ENCODE measurements at regions of chr1 and their contacts with region 1.

Region 1: DNA sequence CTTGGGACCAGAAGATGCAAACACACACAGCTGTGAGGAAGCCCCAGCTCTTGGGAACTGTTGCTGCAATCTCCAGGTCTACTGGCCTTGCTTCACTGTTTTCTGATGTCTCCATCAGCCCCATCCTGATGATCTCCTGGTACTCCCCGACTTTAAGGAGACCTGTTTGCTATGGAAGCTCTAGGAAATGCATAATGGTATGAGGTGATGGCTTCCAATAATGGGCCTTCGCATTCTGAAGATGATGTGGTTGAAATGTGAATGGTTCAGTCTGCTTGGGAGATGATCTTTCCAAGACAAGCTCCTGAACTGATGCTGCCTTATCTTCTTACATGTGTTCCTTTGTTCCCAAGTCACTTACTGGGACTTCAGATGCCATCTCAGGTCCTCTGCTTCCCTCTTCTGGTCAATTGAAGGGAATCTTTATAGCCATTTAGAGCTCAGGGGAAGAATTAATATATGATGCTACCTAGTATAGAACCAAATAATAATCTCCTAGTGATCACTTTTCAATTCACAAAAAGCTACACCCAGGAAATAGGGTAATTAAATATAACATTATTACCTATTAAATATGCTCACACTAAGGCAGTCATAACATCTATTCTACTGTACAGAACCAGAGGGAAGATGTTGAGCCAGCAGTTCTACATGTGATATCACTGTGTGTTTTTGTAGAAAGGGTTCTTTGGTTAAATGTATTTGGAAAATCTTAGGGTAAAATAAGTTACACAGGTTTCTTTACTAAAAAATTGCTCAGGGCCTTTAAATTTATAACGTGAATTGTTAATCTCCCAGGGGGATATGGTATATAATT is 73.9 kb upstream of the VTCN1 start:
- DNase-seq: peak; percentile 34 to 50
- H3K4me3 ChIP-seq: no peak overlapping the region
- H3K4me3 Mint-ChIP-seq: no peak overlapping the region
- H3K27ac Mint-ChIP-seq: no peak overlapping the region
- H3K4me1 ChIP-seq: no peaks in the 10 kb centered on the region
- H3K4me1 Mint-ChIP-seq: no peaks in the 10 kb centered on the region
- H3K27me3 ChIP-seq: no peaks in the 10 kb centered on the region
- H3K27me3 Mint-ChIP-seq: no peaks in the 10 kb centered on the region
- CTCF ChIP-seq: peak; percentile 46 to 48

Region 2: DNA sequence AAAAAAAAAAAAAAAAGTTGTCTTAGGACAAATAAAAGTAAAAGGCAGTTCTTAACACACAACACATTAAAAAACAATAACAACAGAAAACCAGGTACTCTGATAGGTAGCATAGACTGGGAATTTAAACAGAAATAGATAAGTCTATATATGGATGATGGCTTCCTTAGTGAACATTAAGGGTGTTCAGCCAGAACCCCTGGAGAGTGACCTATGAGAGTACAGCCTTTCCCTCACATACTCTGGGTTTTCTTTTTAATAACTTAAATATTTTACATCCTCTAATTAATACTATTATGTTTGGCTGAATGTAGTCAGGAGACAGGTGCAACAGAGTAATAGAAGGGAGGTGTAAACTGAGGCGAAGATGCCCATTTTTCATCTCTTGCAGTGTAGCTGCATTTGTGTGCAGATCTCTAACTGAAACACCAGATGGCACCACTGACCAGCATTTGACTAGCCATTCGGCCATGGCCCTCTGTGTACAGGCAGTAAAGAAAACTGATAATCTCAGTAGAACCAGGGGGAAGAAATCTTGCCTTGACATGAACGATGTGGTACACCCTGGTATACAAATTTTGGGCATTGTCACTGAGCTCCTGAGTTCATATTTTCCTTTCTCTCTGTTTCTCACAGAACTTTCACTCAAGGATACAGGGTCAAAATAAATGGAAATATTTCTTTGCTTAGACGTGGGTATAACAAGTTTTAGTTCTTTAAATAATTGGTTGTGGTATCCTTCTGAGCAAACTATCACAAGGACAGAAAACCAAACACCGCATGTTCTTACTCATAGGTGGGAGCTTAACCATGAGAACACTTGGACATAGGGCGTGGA is 216.9 kb before region 1 on chr1:
- CTCF ChIA-PET with region 1: interaction called, 12 read pairs
- POLR2A ChIA-PET with region 1: no interaction called
- intact Hi-C with region 1: loop called (anchors 1 kb)
- DNase-seq: peak; percentile 38 to 49
- H3K4me3 ChIP-seq: no peak overlapping the region
- H3K4me3 Mint-ChIP-seq: no peak overlapping the region
- H3K27ac Mint-ChIP-seq: no peak overlapping the region
- H3K4me1 ChIP-seq: no peaks in the 10 kb centered on the region
- H3K4me1 Mint-ChIP-seq: no peaks in the 10 kb centered on the region
- H3K27me3 ChIP-seq: no peaks in the 10 kb centered on the region
- H3K27me3 Mint-ChIP-seq: no peaks in the 10 kb centered on the region
- CTCF ChIP-seq: peak; percentile 41 to 58

Region 3: GRCh38 chr1:117121776-117122697 is 162.6 kb before region 1 on chr1:
- CTCF ChIA-PET with region 1: interaction called, 30 read pairs
- POLR2A ChIA-PET with region 1: interaction called, 4 read pairs
- intact Hi-C with region 1: loop called (anchors 1 kb)
- DNase-seq: peak; percentile 93 to 94
- H3K4me3 ChIP-seq: peak overlapping the region; percentile 72
- H3K4me3 Mint-ChIP-seq: peak overlapping the region; percentile 87
- H3K27ac Mint-ChIP-seq: peak overlapping the region; percentile 90
- H3K4me1 ChIP-seq: 0 out of 2 replicates have a peak, but pooled peaks cover 5% of the 10 kb centered on the region
- H3K4me1 Mint-ChIP-seq: peaks cover 12% of the 10 kb centered on the region
- H3K27me3 ChIP-seq: no peaks in the 10 kb centered on the region
- H3K27me3 Mint-ChIP-seq: no peaks in the 10 kb centered on the region
- CTCF ChIP-seq: peak; percentile 54 to 65

Region 4: GRCh38 chr1:117128323-117129079 is 156.1 kb before region 1 on chr1:
- CTCF ChIA-PET with region 1: interaction called, 30 read pairs
- POLR2A ChIA-PET with region 1: no interaction called
- intact Hi-C with region 1: loop called (anchors 1 kb)
- DNase-seq: no peak
- H3K4me3 ChIP-seq: no peak overlapping the region
- H3K4me3 Mint-ChIP-seq: no peak overlapping the region
- H3K27ac Mint-ChIP-seq: no peak overlapping the region
- H3K4me1 ChIP-seq: no peaks in the 10 kb centered on the region
- H3K4me1 Mint-ChIP-seq: peaks cover 12% of the 10 kb centered on the region
- H3K27me3 ChIP-seq: no peaks in the 10 kb centered on the region
- H3K27me3 Mint-ChIP-seq: no peaks in the 10 kb centered on the region
- CTCF ChIP-seq: no peak

Measured in Caco-2 (cell line).